Activated CD4-positive, alpha-beta T cell treated with anti-CD3 and anti-CD28 coated beads for 36 hours (primary cell): ENCODE measurements at regions of chr9 and their contacts with region 1.

Region 1: GRCh38 chr9:136885950-136886578 is at the start of gene TRAF2:
- DNase-seq: peak; percentile 98
- ATAC-seq: peak; percentile 89
- H3K4me3 Mint-ChIP-seq: peak within 1 kb of the TSS; percentile 85
- H3K27ac Mint-ChIP-seq: peak within 1 kb of the TSS; percentile 95
- H3K4me1 Mint-ChIP-seq: peaks cover 51% of the 10 kb centered on the region
- H3K27me3 Mint-ChIP-seq: no peaks in the 10 kb centered on the region
- total RNA-seq, gene TRAF2: 37.4 to 46.2 TPM

Region 2: DNA sequence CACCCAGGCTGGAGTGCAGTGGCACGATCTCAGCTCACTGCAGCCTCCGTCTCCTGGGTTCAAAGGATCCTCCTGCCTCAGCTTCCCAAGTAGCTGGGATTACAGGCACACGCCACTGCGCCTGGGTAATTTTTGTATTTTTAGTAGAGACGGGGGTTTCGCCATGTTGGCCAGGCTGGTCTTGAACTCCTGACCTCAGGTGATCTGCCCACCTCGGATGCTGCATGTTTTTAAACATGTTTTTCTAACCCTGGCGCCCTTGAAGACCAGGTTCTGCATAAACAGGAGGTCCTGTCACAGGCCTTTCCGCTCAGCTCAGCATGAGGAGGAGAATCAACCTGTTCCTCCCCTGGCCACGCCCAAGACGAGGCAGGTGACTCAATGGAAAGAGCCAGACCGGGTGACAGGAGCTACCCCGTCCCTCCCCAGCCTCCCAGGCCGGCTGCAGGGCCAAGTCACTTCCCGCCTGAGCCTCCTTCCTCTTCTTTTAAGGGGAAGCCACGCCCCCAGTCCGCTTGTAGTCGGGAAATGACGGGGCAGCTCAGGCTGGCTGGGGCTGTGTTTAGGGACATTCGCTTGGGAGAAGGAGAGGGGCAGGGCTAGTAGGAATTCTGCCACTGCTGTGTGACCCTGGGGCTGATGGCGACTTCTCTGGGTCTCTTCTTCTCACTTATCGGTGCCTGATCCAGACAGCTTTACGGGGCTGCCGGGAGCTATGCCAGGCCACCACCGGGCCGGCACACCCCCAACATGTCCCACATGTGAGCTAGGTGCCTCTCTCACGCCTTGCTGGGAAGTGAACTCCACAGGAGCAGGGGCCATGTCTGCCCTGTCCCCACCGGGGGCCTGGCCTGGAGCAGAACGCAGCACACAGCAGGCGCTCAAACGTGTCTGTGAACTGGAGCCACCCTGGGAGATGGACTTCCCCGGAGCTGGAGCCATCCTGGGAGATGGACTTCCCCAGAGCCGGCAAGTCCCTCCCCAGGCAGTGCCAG is 346.3 kb before region 1 on chr9:
- CTCF ChIA-PET with region 1: no interaction called
- POLR2A ChIA-PET with region 1: no interaction called
- intact Hi-C with region 1: loop called in 1 of 2 experiments (anchors 1 kb)
- DNase-seq: peak; percentile 99
- ATAC-seq: peak; percentile 81
- H3K4me3 Mint-ChIP-seq: peak overlapping the region; percentile 65
- H3K27ac Mint-ChIP-seq: peak overlapping the region; percentile 99
- H3K4me1 Mint-ChIP-seq: peaks cover 74% of the 10 kb centered on the region
- H3K27me3 Mint-ChIP-seq: no peaks in the 10 kb centered on the region

Region 3: DNA sequence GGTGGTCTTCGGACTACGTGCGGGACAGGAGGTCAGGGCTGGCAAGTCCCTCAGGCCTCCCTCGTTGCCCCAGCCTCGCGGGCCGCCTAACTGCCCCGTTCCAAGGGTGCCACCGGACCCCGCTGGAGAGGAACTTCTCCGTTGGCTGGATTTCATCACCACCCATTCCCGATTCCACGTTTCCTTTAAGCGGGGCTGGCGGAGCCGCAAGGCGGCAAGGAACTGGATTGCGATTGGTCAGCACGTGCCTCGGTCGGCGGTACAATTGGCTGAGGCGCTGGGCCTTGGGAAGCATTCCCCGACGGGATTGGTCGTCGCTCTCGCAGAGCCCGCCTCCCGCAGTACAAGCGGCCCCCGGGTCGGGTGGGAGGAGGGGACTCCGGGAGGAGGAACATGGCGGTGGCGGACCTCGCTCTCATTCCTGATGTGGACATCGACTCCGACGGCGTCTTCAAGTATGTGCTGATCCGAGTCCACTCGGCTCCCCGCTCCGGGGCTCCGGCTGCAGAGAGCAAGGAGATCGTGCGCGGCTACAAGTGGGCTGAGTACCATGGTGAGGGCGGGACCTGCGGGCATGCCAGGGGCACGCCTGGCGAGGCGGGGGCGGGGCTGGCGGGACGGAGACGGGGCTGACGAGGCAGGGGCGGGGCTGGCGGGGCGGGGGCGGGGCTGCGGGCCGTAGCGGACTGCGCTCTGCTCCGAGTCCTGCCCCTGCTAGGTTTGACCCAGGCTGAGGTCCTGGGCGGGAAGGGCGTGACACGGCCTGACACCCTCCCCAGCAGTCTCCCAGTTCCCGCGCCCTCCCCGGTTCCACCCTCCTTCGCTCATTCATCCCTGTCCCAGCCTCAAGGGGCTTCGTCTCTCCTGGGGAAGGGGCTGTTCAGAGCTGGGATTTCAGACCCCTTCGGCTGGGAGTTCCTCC is 36.8 kb before region 1 on chr9 and contains the start of gene PHPT1:
- CTCF ChIA-PET with region 1: no interaction called
- POLR2A ChIA-PET with region 1: no interaction called
- intact Hi-C with region 1: loop called (anchors 1 kb)
- DNase-seq: peak; percentile 98
- ATAC-seq: peak; percentile 91
- H3K4me3 Mint-ChIP-seq: peak within 1 kb of the TSS; percentile 93
- H3K27ac Mint-ChIP-seq: peak within 1 kb of the TSS; percentile 88
- H3K4me1 Mint-ChIP-seq: peaks cover 8% of the 10 kb centered on the region
- H3K27me3 Mint-ChIP-seq: peaks cover 12% of the 10 kb centered on the region
- total RNA-seq, gene PHPT1: 94.5 to 98.9 TPM

Region 4: DNA sequence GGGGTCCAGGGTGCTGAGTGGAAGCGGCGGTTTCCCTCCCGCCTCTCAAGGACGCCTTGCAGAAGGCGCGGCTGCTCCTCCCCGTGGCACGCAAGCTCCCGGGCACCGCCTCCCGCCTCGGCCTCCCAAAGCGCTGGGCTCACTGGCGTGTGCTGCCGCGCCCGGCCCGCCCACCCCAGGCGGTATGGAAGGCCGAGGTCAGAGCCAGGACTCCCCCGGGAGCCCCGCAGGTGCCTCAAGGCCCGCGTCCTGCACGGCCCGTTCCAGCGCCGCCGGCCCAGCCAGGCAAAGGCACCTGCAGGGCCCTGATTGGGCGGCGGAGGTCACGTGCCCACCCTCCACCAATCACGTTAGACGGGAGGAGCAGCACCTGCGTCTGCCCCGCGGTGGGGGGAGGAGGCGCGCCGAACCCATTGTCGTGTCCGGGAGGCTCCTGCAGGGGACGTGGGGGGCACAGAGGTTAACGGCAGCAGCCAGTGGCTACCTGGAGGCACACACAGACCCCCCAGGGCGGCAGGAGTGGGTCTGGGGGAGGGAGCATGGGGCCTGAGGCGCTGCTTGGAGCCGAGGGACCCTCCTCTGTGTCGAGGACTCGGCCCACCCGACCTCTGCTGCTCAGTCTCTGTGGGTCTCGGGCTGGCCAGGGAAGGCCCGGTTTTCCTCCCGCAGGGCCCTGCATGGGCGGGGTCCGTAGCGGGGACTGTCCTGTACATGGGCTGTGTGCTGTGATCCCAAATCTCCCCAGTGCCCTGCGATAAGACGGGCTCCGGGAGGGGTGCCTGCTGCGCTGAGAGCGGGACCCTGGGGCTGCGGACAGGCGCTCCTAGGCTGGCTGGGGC is 64.0 kb after region 1 on chr9:
- CTCF ChIA-PET with region 1: interaction called, 4 read pairs
- POLR2A ChIA-PET with region 1: no interaction called
- intact Hi-C with region 1: loop called in 1 of 2 experiments (anchors 1 kb)
- DNase-seq: peak; percentile 98
- ATAC-seq: peak; percentile 98
- H3K4me3 Mint-ChIP-seq: peak overlapping the region; percentile 78
- H3K27ac Mint-ChIP-seq: peak overlapping the region; percentile 78
- H3K4me1 Mint-ChIP-seq: peaks cover 2% of the 10 kb centered on the region
- H3K27me3 Mint-ChIP-seq: no peaks in the 10 kb centered on the region

Region 5: GRCh38 chr9:137034863-137035761 is 149.0 kb after region 1 on chr9:
- CTCF ChIA-PET with region 1: interaction called, 3 read pairs
- POLR2A ChIA-PET with region 1: no interaction called
- intact Hi-C with region 1: loop called in 1 of 2 experiments (anchors 1 kb)
- DNase-seq: peak; percentile 96
- ATAC-seq: peak; percentile 80
- H3K4me3 Mint-ChIP-seq: peak overlapping the region; percentile 66
- H3K27ac Mint-ChIP-seq: peak overlapping the region; percentile 83
- H3K4me1 Mint-ChIP-seq: peaks cover 36% of the 10 kb centered on the region
- H3K27me3 Mint-ChIP-seq: no peaks in the 10 kb centered on the region

Region 6: GRCh38 chr9:137423004-137423874 is 537.2 kb after region 1 on chr9 and contains the starts of genes EXD3 and NOXA1:
- CTCF ChIA-PET with region 1: no interaction called
- POLR2A ChIA-PET with region 1: interaction called, 3 read pairs
- intact Hi-C with region 1: loop called in 1 of 2 experiments (anchors 10 kb)
- DNase-seq: peak; percentile 98
- ATAC-seq: peak; percentile 95
- H3K4me3 Mint-ChIP-seq: peak within 1 kb of the TSS; percentile 82
- H3K27ac Mint-ChIP-seq: peak within 1 kb of the TSS; percentile 66
- H3K4me1 Mint-ChIP-seq: peaks cover 12% of the 10 kb centered on the region
- H3K27me3 Mint-ChIP-seq: no peaks in the 10 kb centered on the region
- total RNA-seq, gene EXD3: 6.7 to 7.1 TPM
- total RNA-seq, gene NOXA1: 0.97 to 1.7 TPM